HCT116 (cell line): ENCODE measurements at regions of chr1 and their contacts with region 1.

Region 1: GRCh38 chr1:198771563-198772153 is 132.8 kb downstream of the PTPRC start:
- DNase-seq: peak; percentile 34
- ATAC-seq: no peak; the same call in 1 of the 2 replicates
- H3K4me3 ChIP-seq: no peak overlapping the region
- H3K27ac ChIP-seq: no peak overlapping the region
- H3K4me1 ChIP-seq: no peaks in the 10 kb centered on the region
- H3K27me3 ChIP-seq: no peaks in the 10 kb centered on the region
- CTCF ChIP-seq: peak; percentile 51 to 83 (median 68)
- POLR2A ChIP-seq: no peak
- RAD21 ChIP-seq: peak; percentile 87

Region 2: DNA sequence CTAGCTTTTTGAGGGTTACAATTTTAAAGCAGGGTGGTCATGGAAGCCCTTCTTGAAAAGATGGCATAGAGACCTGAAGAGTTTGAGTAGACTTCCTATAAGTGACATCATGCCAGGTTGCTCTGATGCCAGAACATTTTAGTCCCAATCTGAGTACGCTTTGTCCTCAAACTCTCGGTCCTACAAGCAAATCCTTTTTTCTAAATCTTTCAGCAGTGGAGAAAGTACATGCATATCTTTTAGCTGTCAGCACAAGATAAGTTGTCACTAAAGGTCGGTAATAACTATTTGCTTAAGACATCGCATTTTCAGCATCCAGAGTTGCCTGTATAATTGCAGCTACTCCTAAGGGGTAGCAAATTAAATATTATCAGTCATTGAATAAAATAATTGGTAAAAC is 371.6 kb before region 1 on chr1:
- CTCF ChIA-PET with region 1: no interaction called
- POLR2A ChIA-PET with region 1: no interaction called
- RAD21 ChIA-PET with region 1: no interaction called
- intact Hi-C with region 1: no loop called
- DNase-seq: no peak
- ATAC-seq: no peak
- H3K4me3 ChIP-seq: no peak overlapping the region
- H3K27ac ChIP-seq: no peak overlapping the region
- H3K4me1 ChIP-seq: no peaks in the 10 kb centered on the region
- H3K27me3 ChIP-seq: no peaks in the 10 kb centered on the region
- CTCF ChIP-seq: no peak
- POLR2A ChIP-seq: no peak
- RAD21 ChIP-seq: no peak

Region 3: DNA sequence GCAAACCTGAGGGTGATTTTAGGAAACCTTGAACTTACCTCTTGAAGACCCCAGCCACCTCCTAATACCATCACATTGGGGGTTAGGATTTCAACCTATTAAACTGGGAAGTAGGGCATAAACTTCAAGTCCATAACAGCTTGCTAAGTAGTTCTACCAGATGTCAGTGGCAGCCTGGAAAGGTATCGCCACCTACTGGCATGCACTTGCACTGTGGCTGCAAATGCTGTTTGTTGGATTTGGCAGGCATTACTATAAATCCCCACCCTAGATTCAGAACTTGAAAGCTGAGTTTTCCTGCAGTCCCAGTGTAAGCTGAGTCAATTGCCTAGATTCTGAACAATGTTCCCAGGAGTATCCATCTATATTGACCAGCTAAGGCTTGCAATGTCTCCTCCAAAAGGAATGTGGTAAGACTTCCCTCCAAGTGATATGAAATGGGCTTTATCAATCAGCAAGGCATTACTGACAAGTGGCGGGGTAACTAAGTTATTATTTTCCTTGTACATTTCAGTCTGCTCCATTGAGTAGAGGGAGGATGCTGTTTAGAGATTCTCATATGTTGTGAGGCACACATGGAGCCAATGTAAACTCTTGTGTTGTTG is 341.7 kb after region 1 on chr1:
- CTCF ChIA-PET with region 1: interaction called, 3 read pairs
- POLR2A ChIA-PET with region 1: no interaction called
- RAD21 ChIA-PET with region 1: no interaction called
- intact Hi-C with region 1: loop called (anchors 1 kb)
- DNase-seq: peak; percentile 48
- ATAC-seq: peak; percentile 81
- H3K4me3 ChIP-seq: no peak overlapping the region
- H3K27ac ChIP-seq: no peak overlapping the region
- H3K4me1 ChIP-seq: no peaks in the 10 kb centered on the region
- H3K27me3 ChIP-seq: no peaks in the 10 kb centered on the region
- CTCF ChIP-seq: peak; percentile 47 to 90 (median 84); a peak in 5 of 6 replicates
- POLR2A ChIP-seq: no peak
- RAD21 ChIP-seq: peak; percentile 82

Region 4: GRCh38 chr1:199243423-199244061 is 471.9 kb after region 1 on chr1:
- CTCF ChIA-PET with region 1: no interaction called
- POLR2A ChIA-PET with region 1: no interaction called
- RAD21 ChIA-PET with region 1: no interaction called
- intact Hi-C with region 1: loop called (anchors 1 kb)
- DNase-seq: peak; percentile 48
- ATAC-seq: peak; percentile 100
- H3K4me3 ChIP-seq: no peak overlapping the region
- H3K27ac ChIP-seq: no peak overlapping the region
- H3K4me1 ChIP-seq: no peaks in the 10 kb centered on the region
- H3K27me3 ChIP-seq: no peaks in the 10 kb centered on the region
- CTCF ChIP-seq: peak; percentile 64 to 90 (median 85)
- POLR2A ChIP-seq: no peak
- RAD21 ChIP-seq: peak; percentile 89

Region 5: GRCh38 chr1:199422198-199422597 is 650.5 kb after region 1 on chr1:
- CTCF ChIA-PET with region 1: no interaction called
- POLR2A ChIA-PET with region 1: no interaction called
- RAD21 ChIA-PET with region 1: no interaction called
- intact Hi-C with region 1: loop called (anchors 1 kb)
- DNase-seq: peak; percentile 40
- ATAC-seq: peak; percentile 94
- H3K4me3 ChIP-seq: no peak overlapping the region
- H3K27ac ChIP-seq: no peak overlapping the region
- H3K4me1 ChIP-seq: no peaks in the 10 kb centered on the region
- H3K27me3 ChIP-seq: no peaks in the 10 kb centered on the region
- CTCF ChIP-seq: peak; percentile 37 to 63 (median 54); a peak in 5 of 6 replicates
- POLR2A ChIP-seq: no peak
- RAD21 ChIP-seq: peak; percentile 71

Region 6: DNA sequence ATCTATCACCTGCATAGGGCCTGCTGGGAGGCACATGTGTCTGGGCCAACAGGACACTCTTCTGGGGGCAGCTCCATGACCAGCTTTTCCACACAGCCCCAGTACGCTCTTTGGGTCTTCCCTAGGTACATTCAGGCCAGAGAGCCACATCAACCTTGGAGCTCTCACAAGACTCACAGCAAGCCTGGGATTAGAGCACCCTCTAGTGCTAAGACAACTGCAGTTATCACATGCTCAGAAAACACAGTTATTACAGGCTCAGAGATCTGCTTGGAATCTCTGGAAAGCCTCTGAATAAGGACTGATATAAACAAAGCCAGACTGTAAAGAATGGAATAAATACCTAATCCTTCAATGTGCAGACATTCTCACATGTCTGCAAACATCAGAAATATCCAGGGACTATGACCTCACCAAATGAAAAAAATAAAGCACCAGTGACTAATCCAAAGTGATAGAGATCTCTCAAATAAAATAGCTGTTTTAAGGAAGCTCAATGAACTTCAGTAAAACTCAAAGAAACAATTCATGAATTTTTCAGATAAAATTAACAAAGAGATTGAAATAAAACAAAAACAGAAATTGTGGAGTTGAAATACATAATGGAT is 692.0 kb after region 1 on chr1:
- CTCF ChIA-PET with region 1: no interaction called
- POLR2A ChIA-PET with region 1: no interaction called
- RAD21 ChIA-PET with region 1: no interaction called
- intact Hi-C with region 1: loop called (anchors 1 kb)
- DNase-seq: peak; percentile 40
- ATAC-seq: peak; percentile 96
- H3K4me3 ChIP-seq: no peak overlapping the region
- H3K27ac ChIP-seq: no peak overlapping the region
- H3K4me1 ChIP-seq: no peaks in the 10 kb centered on the region
- H3K27me3 ChIP-seq: no peaks in the 10 kb centered on the region
- CTCF ChIP-seq: peak; percentile 41 to 72 (median 64); a peak in 5 of 6 replicates
- POLR2A ChIP-seq: no peak
- RAD21 ChIP-seq: peak; percentile 81

Region 7: GRCh38 chr1:199551967-199552565 is 780.4 kb after region 1 on chr1:
- CTCF ChIA-PET with region 1: no interaction called
- POLR2A ChIA-PET with region 1: no interaction called
- RAD21 ChIA-PET with region 1: no interaction called
- intact Hi-C with region 1: loop called (anchors 1 kb)
- DNase-seq: peak; percentile 40
- ATAC-seq: peak; percentile 67
- H3K4me3 ChIP-seq: no peak overlapping the region
- H3K27ac ChIP-seq: no peak overlapping the region
- H3K4me1 ChIP-seq: no peaks in the 10 kb centered on the region
- H3K27me3 ChIP-seq: no peaks in the 10 kb centered on the region
- CTCF ChIP-seq: peak; percentile 66 to 87 (median 75); a peak in 5 of 6 replicates
- POLR2A ChIP-seq: no peak
- RAD21 ChIP-seq: peak; percentile 79